ENCODE measurements at regions of chr11 and their contacts with region 1.

Region 1: DNA sequence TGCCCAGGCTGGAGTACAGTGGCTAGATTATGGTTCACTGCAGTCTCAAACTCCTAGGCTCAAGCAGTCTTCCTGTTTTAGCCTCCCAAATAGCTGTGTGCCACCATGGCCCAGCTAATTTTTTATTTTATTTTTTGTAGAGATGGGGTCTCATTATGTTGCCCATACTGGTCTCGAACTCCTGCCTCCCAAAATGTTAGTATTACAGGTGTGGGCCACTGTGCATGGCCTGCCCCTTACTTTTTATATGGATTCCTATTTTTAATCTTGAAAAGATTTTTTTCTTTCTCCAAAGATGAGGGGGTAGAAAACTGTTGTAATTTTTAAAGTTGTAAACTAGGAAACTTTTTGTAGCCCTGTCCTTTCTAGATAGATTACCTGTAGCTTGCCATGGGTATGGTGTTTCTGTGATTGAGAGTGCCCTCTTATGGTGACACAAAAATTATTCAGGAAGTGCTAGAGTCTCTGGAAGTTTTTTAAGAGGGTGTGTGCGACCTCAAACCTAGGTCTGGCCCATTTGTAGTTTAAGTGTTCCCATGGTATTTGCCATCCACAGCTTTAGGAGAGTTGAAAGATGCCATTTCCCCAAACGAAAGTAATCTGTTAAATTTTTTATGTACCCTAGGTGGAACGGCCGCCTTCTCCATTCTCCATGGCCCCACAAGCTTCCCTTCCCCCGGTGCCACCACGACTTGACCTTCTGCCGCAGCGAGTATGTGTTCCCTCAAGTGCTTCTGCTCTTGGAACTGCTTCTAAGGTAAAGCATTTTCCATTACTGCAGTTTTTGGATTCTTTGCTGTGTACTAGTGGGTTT is 32.4 kb downstream of the MCAM start:
- DNase-seq: peak; percentile 70
- ATAC-seq: peak; percentile 74
- H3K4me3 ChIP-seq: no peak overlapping the region
- H3K4me3 Mint-ChIP-seq: no peak overlapping the region
- H3K27ac ChIP-seq: no peak overlapping the region
- H3K27ac Mint-ChIP-seq: peak overlapping the region; percentile 8
- H3K4me1 ChIP-seq: peaks cover 3 to 5% of the 10 kb centered on the region in 2 donors
- H3K4me1 Mint-ChIP-seq: peaks cover 6% of the 10 kb centered on the region
- H3K27me3 ChIP-seq: no peaks in the 10 kb centered on the region
- H3K27me3 Mint-ChIP-seq: no peaks in the 10 kb centered on the region
- CTCF ChIP-seq: peak; percentile 70

Region 2: GRCh38 chr11:119144825-119145486 is 139.6 kb before region 1 on chr11:
- CTCF ChIA-PET with region 1: interaction called, 5 read pairs
- POLR2A ChIA-PET with region 1: interaction called, 4 read pairs
- intact Hi-C with region 1: loop called (anchors 1 kb)
- DNase-seq: peak; percentile 55
- ATAC-seq: peak; percentile 74
- H3K4me3 ChIP-seq: no peak overlapping the region
- H3K4me3 Mint-ChIP-seq: no peak overlapping the region
- H3K27ac ChIP-seq: no peak overlapping the region
- H3K27ac Mint-ChIP-seq: no peak overlapping the region
- H3K4me1 ChIP-seq: peaks cover 12 to 19% of the 10 kb centered on the region in 2 donors
- H3K4me1 Mint-ChIP-seq: peaks cover 13% of the 10 kb centered on the region
- H3K27me3 ChIP-seq: peaks cover 0 to 54% (median 28%) of the 10 kb centered on the region in 4 experiments
- H3K27me3 Mint-ChIP-seq: peaks cover 45% of the 10 kb centered on the region
- CTCF ChIP-seq: peak; percentile 47

Region 3: DNA sequence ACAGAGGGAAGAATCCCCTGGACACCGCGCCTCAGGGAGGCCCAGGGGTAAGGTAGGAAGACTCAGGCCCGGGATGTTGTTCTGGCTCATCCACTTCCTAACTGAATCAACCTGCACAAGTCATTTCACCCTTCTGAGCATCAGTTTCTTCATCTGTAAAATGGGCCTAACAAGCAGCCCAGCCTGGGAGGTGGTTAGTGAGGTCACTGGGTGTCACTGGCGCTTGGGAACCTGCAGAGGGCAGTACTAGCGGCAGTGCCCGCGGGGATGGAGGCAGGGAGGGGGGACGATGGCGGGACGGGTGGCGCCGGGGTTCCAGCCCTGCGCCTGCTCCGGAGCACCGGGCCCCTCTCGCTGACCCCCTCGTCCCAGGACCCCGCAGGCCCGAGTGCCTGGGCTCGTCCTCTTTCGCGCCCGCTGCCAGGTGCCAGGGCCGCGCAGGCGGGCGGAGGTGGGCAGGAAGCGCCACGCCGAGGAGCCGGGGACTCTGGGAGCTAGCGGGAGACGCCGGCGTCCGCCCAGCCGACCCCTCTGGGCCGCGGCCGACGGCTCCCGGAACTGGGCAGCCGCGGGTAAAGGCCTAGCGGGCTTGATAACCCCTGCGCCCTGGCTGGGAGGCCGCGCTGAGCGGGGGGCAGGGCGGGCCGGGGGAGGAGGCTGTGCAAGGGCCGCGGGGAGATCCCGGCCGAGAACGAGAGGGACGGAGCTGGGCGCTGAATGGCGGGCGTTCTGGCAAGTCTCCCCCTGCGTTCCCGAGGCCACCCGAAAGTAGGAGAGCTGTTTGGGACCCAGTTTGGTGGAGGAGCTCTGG is 115.9 kb before region 1 on chr11 and contains the start of gene NLRX1:
- CTCF ChIA-PET with region 1: interaction called, 25 read pairs
- POLR2A ChIA-PET with region 1: no interaction called
- intact Hi-C with region 1: loop called (anchors 1 kb)
- DNase-seq: peak; percentile 88
- ATAC-seq: peak; percentile 96
- H3K4me3 ChIP-seq: peak within 1 kb of the TSS; percentile 56 to 80 (median 68)
- H3K4me3 Mint-ChIP-seq: peak within 1 kb of the TSS; percentile 92
- H3K27ac ChIP-seq: peak within 1 kb of the TSS; percentile 10 to 65
- H3K27ac Mint-ChIP-seq: peak within 1 kb of the TSS; percentile 81
- H3K4me1 ChIP-seq: peaks cover 5 to 12% of the 10 kb centered on the region in 2 donors
- H3K4me1 Mint-ChIP-seq: peaks cover 4% of the 10 kb centered on the region
- H3K27me3 ChIP-seq: no peaks in the 10 kb centered on the region
- H3K27me3 Mint-ChIP-seq: no peaks in the 10 kb centered on the region
- CTCF ChIP-seq: peak; percentile 88
- total RNA-seq, gene NLRX1: 9.6 and 10.4 TPM in 2 replicates

Region 4: GRCh38 chr11:119205574-119206510 is 78.7 kb before region 1 on chr11 and contains the start of gene CBL:
- CTCF ChIA-PET with region 1: interaction called, 41 read pairs
- POLR2A ChIA-PET with region 1: interaction called, 3 read pairs
- intact Hi-C with region 1: loop called (anchors 1 kb)
- DNase-seq: peak; percentile 96
- ATAC-seq: peak; percentile 88
- H3K4me3 ChIP-seq: peak within 1 kb of the TSS; percentile 93 to 98 (median 96)
- H3K4me3 Mint-ChIP-seq: peak within 1 kb of the TSS; percentile 97
- H3K27ac ChIP-seq: peak within 1 kb of the TSS; percentile 60 to 84
- H3K27ac Mint-ChIP-seq: peak within 1 kb of the TSS; percentile 94
- H3K4me1 ChIP-seq: peaks cover 18 to 20% of the 10 kb centered on the region in 2 donors
- H3K4me1 Mint-ChIP-seq: peaks cover 33% of the 10 kb centered on the region
- H3K27me3 ChIP-seq: no peaks in the 10 kb centered on the region
- H3K27me3 Mint-ChIP-seq: no peaks in the 10 kb centered on the region
- CTCF ChIP-seq: peak; percentile 78
- total RNA-seq, gene CBL: 35.2 and 38.7 TPM in 2 replicates